ENCODE measurements at regions of chrX and their contacts with region 1.

Region 1: DNA sequence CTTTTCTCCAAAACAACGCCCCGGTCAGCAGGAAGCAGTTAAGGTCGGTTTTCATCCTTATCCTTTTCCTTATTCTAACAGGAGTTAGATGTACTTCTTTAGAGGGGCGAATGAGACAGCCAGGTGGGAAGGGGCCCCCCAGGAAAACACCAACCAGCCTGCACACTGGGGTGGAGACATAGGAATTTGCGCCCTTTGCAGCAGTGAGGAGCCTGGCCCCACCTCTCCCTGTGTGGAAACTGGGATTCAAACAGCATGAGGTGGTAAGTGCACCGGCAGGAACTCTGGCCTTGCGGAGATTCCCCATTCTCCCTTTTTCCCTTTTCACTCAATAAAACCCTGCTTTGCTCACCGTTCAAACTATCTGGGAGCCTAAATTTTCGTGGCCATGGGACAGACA is 8.0 kb upstream of the FAM47C start:
- DNase-seq: no peak

Region 2: DNA sequence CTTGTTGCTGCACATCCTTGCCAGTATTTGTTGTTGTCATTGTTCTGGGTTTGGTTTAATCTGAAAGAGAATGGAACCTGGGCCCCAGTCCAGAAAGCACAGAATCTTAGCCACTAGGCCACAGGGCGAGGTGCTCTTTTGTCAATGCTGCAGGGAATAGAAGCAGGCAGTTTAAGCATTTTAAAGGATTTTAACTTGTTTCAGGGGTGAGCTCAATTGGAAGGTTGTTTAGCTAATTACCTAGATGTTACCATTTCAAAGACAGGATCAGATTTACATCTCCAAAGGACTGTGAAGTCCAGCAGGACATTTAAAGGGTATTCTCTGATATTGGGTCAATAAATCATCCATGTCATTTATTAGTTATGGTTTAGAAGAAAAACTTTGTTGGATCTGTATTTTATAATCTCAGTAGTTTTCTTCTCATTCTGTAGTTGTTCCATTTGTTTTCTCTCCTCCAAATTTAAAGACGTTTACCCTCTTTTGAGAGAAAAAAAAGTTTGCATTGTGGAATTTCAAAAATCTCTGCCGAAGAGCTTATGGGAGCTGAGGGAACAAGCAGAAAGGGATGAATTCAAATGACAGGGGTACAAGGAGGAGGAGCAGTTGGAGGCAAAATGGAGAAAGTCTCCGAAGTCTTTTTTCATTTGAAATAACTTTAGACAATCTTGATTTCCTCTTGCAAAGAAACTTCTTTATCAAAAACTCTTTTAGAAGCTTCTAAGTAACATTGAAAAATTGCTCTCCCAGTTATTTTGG is 49.5 kb before region 1 on chrX:
- intact Hi-C with region 1: loop called in 1 of 2 experiments (anchors 2 kb)
- DNase-seq: no peak